ENCODE measurements at regions of chr10 and their contacts with region 1.

Region 1: DNA sequence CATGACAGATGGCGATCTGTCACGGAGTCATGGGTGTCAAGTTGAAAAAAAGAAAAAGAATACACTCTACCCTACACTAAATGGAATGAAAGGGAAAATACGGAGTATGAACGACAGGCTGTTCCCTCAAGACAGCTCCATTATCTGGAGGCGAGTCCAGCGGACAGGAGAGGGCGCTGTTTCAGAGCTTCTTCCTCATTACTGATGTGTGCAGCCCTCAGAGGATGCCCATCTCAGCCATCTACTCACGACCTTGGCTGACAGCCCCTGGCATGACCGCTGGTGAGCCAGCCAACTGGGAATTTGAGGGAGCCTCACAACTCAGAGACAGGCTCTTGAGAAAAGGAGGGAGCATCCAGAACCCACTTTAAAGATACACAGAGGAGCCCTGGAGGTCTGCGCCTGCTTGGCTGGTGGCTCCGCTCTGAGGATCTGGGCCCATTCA is 49.6 kb upstream of the SMNDC1 start:
- DNase-seq: peak; percentile 98
- H3K4me3 Mint-ChIP-seq: peak overlapping the region; percentile 74
- H3K27ac Mint-ChIP-seq: peak overlapping the region; percentile 99
- H3K4me1 Mint-ChIP-seq: peaks cover 60% of the 10 kb centered on the region
- H3K27me3 Mint-ChIP-seq: no peaks in the 10 kb centered on the region

Region 2: DNA sequence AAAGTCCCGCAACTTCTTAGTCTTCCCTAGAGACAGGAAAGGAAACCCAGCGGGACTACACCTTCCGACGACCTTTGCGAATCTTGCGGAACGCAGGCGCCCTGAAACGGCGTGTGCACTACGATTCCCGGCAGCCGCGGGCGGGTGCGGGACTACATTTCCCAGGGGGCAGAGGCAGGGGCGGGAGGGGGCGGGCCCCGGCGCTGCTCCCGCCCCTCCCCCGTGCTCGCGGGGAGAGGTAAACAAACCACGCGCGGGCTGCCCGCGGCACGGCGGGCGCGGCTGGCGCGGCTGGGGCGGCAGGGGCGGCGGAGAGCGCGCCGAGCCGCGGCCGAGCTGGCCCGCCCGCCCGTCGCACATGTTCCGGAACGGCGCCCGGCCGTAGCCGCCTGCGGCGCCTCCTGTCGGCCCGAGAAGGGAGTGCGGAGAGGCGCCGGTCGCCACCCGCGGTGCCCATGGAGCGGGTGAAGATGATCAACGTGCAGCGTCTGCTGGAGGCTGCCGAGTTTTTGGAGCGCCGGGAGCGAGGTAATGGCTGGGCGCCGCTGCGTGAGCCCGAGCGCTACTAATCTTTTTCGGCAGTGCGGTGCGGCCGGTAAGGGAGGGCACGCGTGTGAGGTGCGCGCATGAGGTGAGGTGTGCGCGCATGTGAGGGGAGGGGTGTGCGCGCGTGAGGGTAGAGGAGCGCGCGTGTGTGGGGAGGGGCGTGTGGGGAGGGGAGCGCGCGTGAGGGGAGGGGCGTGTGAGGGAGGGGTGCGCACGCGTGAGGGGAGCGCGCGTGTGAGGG is 128.4 kb before region 1 on chr10:
- CTCF ChIA-PET with region 1: interaction called, 4 read pairs
- intact Hi-C with region 1: loop called (anchors 2 kb)
- DNase-seq: peak; percentile 93
- H3K4me3 Mint-ChIP-seq: peak overlapping the region; percentile 97
- H3K27ac Mint-ChIP-seq: peak overlapping the region; percentile 94
- H3K4me1 Mint-ChIP-seq: peaks cover 47% of the 10 kb centered on the region
- H3K27me3 Mint-ChIP-seq: no peaks in the 10 kb centered on the region

Region 3: GRCh38 chr10:110379831-110380230 is 25.5 kb after region 1 on chr10:
- CTCF ChIA-PET with region 1: interaction called, 18 read pairs
- intact Hi-C with region 1: no loop called
- DNase-seq: no peak
- H3K4me3 Mint-ChIP-seq: no peak overlapping the region
- H3K27ac Mint-ChIP-seq: no peak overlapping the region
- H3K4me1 Mint-ChIP-seq: peaks cover 19% of the 10 kb centered on the region
- H3K27me3 Mint-ChIP-seq: no peaks in the 10 kb centered on the region

Region 4: DNA sequence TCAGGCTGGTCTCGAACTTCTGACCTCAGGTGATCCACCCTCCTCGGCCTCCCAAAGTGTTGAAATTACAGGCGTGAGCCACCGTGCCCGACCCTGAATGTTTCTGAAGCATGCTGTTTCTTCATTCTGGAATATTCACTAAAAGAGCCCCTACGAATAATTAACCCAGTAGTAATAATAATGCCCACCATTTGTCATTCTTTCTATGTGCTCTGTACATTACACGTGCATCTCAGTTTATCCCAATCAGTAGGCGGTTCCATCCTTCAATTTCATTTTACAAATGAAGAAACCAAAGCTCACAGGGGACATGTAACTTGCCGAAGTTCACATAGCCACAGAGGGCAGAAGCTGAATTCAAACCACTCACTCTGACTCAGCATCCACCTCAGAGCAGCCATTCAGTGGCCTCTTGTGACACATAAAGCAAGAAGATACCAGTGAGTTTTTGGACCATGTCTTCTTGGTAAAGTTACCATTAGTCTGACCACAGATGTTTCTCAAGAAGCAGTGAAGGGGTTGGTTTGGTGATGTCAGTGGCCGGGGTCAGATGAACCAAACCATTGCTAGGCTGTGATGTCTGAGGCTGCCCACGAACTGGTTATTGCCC is 71.4 kb after region 1 on chr10:
- CTCF ChIA-PET with region 1: interaction called, 4 read pairs
- intact Hi-C with region 1: loop called (anchors 1 kb)
- DNase-seq: peak; percentile 68
- H3K4me3 Mint-ChIP-seq: no peak overlapping the region
- H3K27ac Mint-ChIP-seq: peak overlapping the region; percentile 76
- H3K4me1 Mint-ChIP-seq: peaks cover 30% of the 10 kb centered on the region
- H3K27me3 Mint-ChIP-seq: no peaks in the 10 kb centered on the region

Region 5: GRCh38 chr10:110502851-110503301 is 148.5 kb after region 1 on chr10:
- CTCF ChIA-PET with region 1: interaction called, 64 read pairs
- intact Hi-C with region 1: loop called (anchors 1 kb)
- DNase-seq: peak; percentile 66
- H3K4me3 Mint-ChIP-seq: peak overlapping the region; percentile 97
- H3K27ac Mint-ChIP-seq: peak overlapping the region; percentile 85
- H3K4me1 Mint-ChIP-seq: peaks cover 74% of the 10 kb centered on the region
- H3K27me3 Mint-ChIP-seq: no peaks in the 10 kb centered on the region

Region 6: DNA sequence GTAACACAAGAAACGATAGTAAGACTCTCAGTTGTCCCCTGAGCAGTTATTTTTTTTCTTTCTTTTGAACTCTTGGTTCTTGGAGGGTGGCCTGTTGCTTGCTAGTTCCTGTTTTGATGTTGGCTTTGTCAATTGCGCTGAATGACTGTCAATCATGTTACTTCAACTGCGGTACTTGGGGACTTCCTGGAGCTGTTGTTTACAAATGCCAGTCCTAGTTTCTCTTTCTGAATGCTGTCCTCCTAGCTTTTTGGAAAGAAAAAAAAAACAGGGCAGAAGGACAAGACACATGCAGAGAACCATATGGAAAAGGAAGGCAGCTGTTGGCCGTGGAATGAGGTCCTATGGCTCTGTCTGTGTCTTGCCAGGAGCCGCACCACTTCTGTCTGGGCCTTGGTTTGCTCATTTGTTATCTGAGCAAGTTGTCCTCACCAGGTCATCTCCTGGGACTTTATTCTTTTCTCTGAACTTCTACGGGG is 510.4 kb after region 1 on chr10:
- CTCF ChIA-PET with region 1: no interaction called
- intact Hi-C with region 1: loop called (anchors 2 kb)
- DNase-seq: peak; percentile 69
- H3K4me3 Mint-ChIP-seq: peak overlapping the region; percentile 58
- H3K27ac Mint-ChIP-seq: peak overlapping the region; percentile 84
- H3K4me1 Mint-ChIP-seq: peaks cover 96% of the 10 kb centered on the region
- H3K27me3 Mint-ChIP-seq: no peaks in the 10 kb centered on the region

Region 7: DNA sequence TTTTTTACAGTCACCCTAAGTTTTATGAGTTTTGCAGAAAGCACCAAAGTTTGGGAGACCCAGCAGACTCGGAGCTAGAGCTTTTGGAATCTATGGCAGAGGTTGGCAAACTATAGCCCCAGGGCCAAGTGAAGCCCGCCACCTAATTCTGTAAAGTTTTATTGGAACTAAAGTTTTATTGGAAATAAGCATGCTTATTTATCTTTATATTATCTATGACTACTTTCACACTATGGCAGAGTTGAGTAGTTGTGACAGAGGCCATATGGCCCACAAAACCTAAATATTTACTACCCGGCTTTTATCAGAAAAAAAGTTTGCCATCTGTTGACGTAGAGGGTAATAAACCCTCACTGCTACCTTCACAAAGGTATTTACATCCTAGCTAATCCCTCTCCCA is 1561.7 kb after region 1 on chr10:
- CTCF ChIA-PET with region 1: no interaction called
- intact Hi-C with region 1: no loop called
- DNase-seq: no peak
- H3K4me3 Mint-ChIP-seq: no peak overlapping the region
- H3K27ac Mint-ChIP-seq: no peak overlapping the region
- H3K4me1 Mint-ChIP-seq: no peaks in the 10 kb centered on the region
- H3K27me3 Mint-ChIP-seq: peaks cover 9% of the 10 kb centered on the region